Activated T-helper 2 cell treated with anti-CD3 and anti-CD28 coated beads, Interferon-gamma antibody, Interleukin-2, Interleukin-4, amounts not matched to agents 10 μg/mL and 5 μg/mL and 100 μg/mL, durations not matched to agents 14 hours and 24 hours and 36 hours (primary cell): ENCODE measurements at regions of chr2 and their contacts with region 1.

Region 1: GRCh38 chr2:202178342-202178958 is 59.9 kb downstream of the SUMO1 start:
- DNase-seq: peak; percentile 16
- H3K4me3 Mint-ChIP-seq: no peak overlapping the region
- H3K27ac Mint-ChIP-seq: no peak overlapping the region
- H3K4me1 Mint-ChIP-seq: peaks cover 5% of the 10 kb centered on the region
- H3K27me3 Mint-ChIP-seq: peaks cover 8% of the 10 kb centered on the region

Region 2: GRCh38 chr2:201795607-201796477 is 382.6 kb before region 1 on chr2:
- intact Hi-C with region 1: loop called (anchors 5 kb)
- DNase-seq: no peak
- H3K4me3 Mint-ChIP-seq: no peak overlapping the region
- H3K27ac Mint-ChIP-seq: no peak overlapping the region
- H3K4me1 Mint-ChIP-seq: no peaks in the 10 kb centered on the region
- H3K27me3 Mint-ChIP-seq: peaks cover 10% of the 10 kb centered on the region

Region 3: GRCh38 chr2:201860636-201861066 is 317.8 kb before region 1 on chr2:
- intact Hi-C with region 1: loop called (anchors 1 kb)
- DNase-seq: peak; percentile 14
- H3K4me3 Mint-ChIP-seq: no peak overlapping the region
- H3K27ac Mint-ChIP-seq: no peak overlapping the region
- H3K4me1 Mint-ChIP-seq: peaks cover 11% of the 10 kb centered on the region
- H3K27me3 Mint-ChIP-seq: peaks cover 37% of the 10 kb centered on the region

Region 4: GRCh38 chr2:202033321-202034248 is 144.9 kb before region 1 on chr2 and contains the start of gene FZD7:
- intact Hi-C with region 1: loop called (anchors 5 kb)
- DNase-seq: peak; percentile 79
- H3K4me3 Mint-ChIP-seq: peak within 1 kb of the TSS; percentile 83
- H3K27ac Mint-ChIP-seq: no peak within 1 kb of the TSS
- H3K4me1 Mint-ChIP-seq: peaks cover 11% of the 10 kb centered on the region
- H3K27me3 Mint-ChIP-seq: peaks cover 50% of the 10 kb centered on the region
- total RNA-seq, gene FZD7: 1.1 and 1.4 TPM in 2 replicates

Region 5: GRCh38 chr2:202104278-202104870 is 74.1 kb before region 1 on chr2:
- intact Hi-C with region 1: loop called (anchors 1 kb)
- DNase-seq: no peak
- H3K4me3 Mint-ChIP-seq: no peak overlapping the region
- H3K27ac Mint-ChIP-seq: no peak overlapping the region
- H3K4me1 Mint-ChIP-seq: no peaks in the 10 kb centered on the region
- H3K27me3 Mint-ChIP-seq: peaks cover 2% of the 10 kb centered on the region